ENCODE measurements at regions of chr2 and their contacts with region 1.

Region 1: GRCh38 chr2:1795834-1796580 is 51.7 kb upstream of the PXDN start:
- DNase-seq: no peak
- H3K4me3 ChIP-seq: no peak overlapping the region
- H3K27ac ChIP-seq: no peak overlapping the region
- H3K4me1 ChIP-seq: peaks cover 7% of the 10 kb centered on the region
- H3K27me3 ChIP-seq: no peaks in the 10 kb centered on the region
- CTCF ChIP-seq: no peak

Region 2: GRCh38 chr2:1817256-1818051 is 21.4 kb after region 1 on chr2:
- CTCF ChIA-PET with region 1: interaction called, 10 read pairs
- POLR2A ChIA-PET with region 1: no interaction called
- intact Hi-C with region 1: no loop called
- DNase-seq: peak; percentile 69
- H3K4me3 ChIP-seq: no peak overlapping the region
- H3K27ac ChIP-seq: no peak overlapping the region
- H3K4me1 ChIP-seq: peaks cover 12% of the 10 kb centered on the region
- H3K27me3 ChIP-seq: no peaks in the 10 kb centered on the region
- CTCF ChIP-seq: peak; percentile 99